K562 (cell line): ENCODE measurements at regions of chr3 and their contacts with region 1.

Region 1: DNA sequence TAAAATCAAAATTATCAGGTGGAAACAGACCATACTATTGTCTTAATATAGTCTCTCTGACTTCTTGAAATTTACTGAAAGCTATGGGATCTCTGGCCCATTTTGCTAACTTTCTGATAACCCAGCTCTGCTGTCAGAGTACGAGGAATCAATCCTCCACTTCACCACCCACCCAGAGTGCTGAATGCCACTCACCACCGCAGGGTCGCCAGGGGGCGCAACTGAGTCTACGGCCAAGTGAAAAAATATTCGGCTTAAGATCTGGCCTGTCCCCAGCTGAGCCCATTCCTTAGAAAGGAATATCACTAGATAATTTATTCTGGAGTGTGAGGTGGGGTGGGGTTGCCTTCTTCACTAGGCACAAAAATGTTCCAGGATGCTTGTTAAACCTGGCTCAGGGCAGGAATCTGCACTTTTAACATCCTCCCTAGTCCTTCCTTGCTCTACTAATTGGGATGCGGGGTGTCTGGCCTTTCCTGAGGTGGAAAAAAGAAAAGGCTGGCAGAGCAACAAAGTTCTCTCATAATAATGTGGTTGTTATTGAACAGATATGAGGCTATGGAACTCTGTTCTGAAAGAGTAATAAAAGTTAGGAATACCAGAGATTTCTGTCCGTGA is 520.6 kb downstream of the MFSD1 start:
- DNase-seq: peak; percentile 24 to 30 (median 26)
- ATAC-seq: peak; percentile 47; the same call in 1 of the 3 replicates
- H3K4me3 ChIP-seq: no peak overlapping the region
- H3K27ac ChIP-seq: no peak overlapping the region
- H3K4me1 ChIP-seq: no peaks in the 10 kb centered on the region
- H3K27me3 ChIP-seq: no peaks in the 10 kb centered on the region
- CTCF ChIP-seq: peak; percentile 26 to 65 (median 31); a peak in 5 of 6 replicates
- EP300 ChIP-seq: no peak
- POLR2A ChIP-seq: no peak
- RAD21 ChIP-seq: peak in 1 of 2 experiments; percentile 31; a peak in 1 of 4 replicates

Region 2: GRCh38 chr3:158105710-158106253 is 1216.6 kb before region 1 on chr3:
- CTCF ChIA-PET with region 1: no interaction called
- POLR2A ChIA-PET with region 1: no interaction called
- in situ Hi-C with region 1: no loop called
- intact Hi-C with region 1: no loop called
- DNase-seq: peak; percentile 64 to 72 (median 69)
- ATAC-seq: peak; percentile 70
- H3K4me3 ChIP-seq: peak overlapping the region; percentile 88
- H3K27ac ChIP-seq: peak overlapping the region; percentile 72
- H3K4me1 ChIP-seq: peaks cover 6 to 28% of the 10 kb centered on the region in 2 experiments; a peak in 4 of 5 replicates
- H3K27me3 ChIP-seq: no peaks in the 10 kb centered on the region
- CTCF ChIP-seq: no peak
- EP300 ChIP-seq: no peak
- POLR2A ChIP-seq: no peak
- RAD21 ChIP-seq: no peak

Region 3: GRCh38 chr3:159804726-159805410 is 482.4 kb after region 1 on chr3:
- CTCF ChIA-PET with region 1: no interaction called
- POLR2A ChIA-PET with region 1: no interaction called
- in situ Hi-C with region 1: no loop called
- intact Hi-C with region 1: loop called (anchors 2 kb)
- DNase-seq: peak; percentile 32 to 65 (median 42)
- ATAC-seq: peak; percentile 97
- H3K4me3 ChIP-seq: no peak overlapping the region
- H3K27ac ChIP-seq: no peak overlapping the region
- H3K4me1 ChIP-seq: no peaks in the 10 kb centered on the region
- H3K27me3 ChIP-seq: no peaks in the 10 kb centered on the region
- CTCF ChIP-seq: peak; percentile 66 to 78 (median 78)
- EP300 ChIP-seq: no peak
- POLR2A ChIP-seq: no peak
- RAD21 ChIP-seq: peak; percentile 54 to 80

Region 4: GRCh38 chr3:159882790-159883779 is 560.7 kb after region 1 on chr3:
- CTCF ChIA-PET with region 1: no interaction called
- POLR2A ChIA-PET with region 1: no interaction called
- in situ Hi-C with region 1: no loop called
- intact Hi-C with region 1: no loop called
- DNase-seq: no peak
- ATAC-seq: no peak
- H3K4me3 ChIP-seq: no peak overlapping the region
- H3K27ac ChIP-seq: no peak overlapping the region
- H3K4me1 ChIP-seq: no peaks in the 10 kb centered on the region
- H3K27me3 ChIP-seq: peaks cover under 1 to 3% of the 10 kb centered on the region in 2 experiments; a peak in 1 of 5 replicates
- CTCF ChIP-seq: no peak
- EP300 ChIP-seq: no peak
- POLR2A ChIP-seq: no peak
- RAD21 ChIP-seq: no peak